BJ (cell line): ENCODE measurements at regions of chr12 and their contacts with region 1.

Region 1: GRCh38 chr12:57111031-57111734 is at the start of gene STAT6:
- DNase-seq: no peak
- H3K4me3 ChIP-seq: peak within 1 kb of the TSS; percentile 73
- H3K27me3 ChIP-seq: no peaks in the 10 kb centered on the region
- CTCF ChIP-seq: no peak
- polyA plus RNA-seq, gene STAT6: 110 and 177 TPM in 2 replicates

Region 2: DNA sequence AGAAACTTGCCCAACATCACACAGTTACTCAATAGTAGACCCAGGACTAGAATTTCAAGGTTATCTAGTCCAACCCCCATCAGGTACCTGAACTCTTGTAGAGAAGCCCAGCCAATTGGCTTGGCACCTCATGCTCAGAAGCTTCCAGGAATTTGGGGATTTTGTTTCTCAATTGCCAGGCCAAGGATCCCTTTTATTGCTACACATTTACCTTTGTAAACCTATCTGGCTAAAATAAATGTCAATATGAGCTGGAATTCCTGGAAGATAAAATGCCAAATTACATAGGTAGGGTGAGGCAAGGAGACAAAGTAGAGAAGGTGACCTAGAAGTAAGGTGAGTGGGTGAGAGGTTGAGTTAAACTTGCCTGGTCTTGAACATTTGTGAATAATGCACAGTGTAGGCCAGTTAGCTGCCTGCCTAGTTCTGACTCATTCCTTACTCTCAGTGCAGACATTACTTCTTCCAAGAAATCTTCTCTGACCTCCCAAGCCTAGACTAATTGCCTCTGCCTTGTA is 213.3 kb before region 1 on chr12:
- CTCF ChIA-PET with region 1: no interaction called
- POLR2A ChIA-PET with region 1: no interaction called
- DNase-seq: no peak
- H3K4me3 ChIP-seq: no peak overlapping the region
- H3K27me3 ChIP-seq: no peaks in the 10 kb centered on the region
- CTCF ChIP-seq: no peak

Region 3: DNA sequence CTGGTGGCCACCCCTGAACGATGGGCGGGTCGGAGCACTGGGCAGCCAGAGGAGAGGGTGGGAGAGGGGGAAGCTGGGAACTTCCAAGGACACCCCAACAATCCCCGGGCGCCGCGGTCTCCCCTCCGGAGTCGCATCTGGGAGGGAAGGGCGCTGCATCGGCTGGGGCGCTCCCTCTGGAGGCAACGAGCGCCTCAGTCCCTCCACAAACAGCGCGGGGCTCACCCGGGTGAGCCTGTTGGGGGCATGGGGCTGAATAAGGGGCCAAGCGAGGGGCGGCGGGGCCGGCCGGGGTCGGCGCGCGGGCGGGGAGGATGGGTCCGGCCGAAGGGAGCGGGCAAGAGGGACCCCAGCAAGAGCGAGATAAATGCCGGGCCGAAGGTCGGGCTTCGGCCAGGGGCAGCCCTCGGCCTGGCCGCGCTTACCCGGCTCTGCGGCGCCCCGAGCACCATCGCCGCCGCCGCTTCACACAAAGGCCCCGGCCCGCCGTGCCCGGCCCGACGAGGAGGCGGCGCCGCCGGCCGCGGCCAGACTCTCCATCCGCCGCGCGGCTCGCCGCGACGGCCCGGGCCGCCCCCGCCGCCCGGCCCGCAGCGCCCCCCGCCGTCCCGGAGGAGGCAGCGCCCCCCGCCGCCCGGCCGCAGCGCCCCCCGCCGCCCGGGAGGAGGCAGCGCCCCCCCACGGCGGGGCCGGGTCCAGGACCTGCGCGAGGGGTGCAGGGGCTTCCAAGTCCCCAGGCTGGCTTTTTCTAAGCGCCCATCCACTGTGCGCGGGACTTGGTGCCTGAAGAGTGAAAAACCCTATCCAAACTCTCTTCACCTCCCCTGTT is 105.0 kb before region 1 on chr12 and contains the start of gene ZBTB39:
- CTCF ChIA-PET with region 1: interaction called, 21 read pairs
- POLR2A ChIA-PET with region 1: no interaction called
- DNase-seq: no peak
- H3K4me3 ChIP-seq: peak within 1 kb of the TSS; percentile 84
- H3K27me3 ChIP-seq: no peaks in the 10 kb centered on the region
- CTCF ChIP-seq: peak; percentile 49
- polyA plus RNA-seq, gene ZBTB39: 3.9 and 4.2 TPM in 2 replicates

Region 4: GRCh38 chr12:57069523-57069922 is 41.7 kb before region 1 on chr12:
- CTCF ChIA-PET with region 1: interaction called, 199 read pairs
- POLR2A ChIA-PET with region 1: interaction called, 8 read pairs
- DNase-seq: no peak
- H3K4me3 ChIP-seq: no peak overlapping the region
- H3K27me3 ChIP-seq: no peaks in the 10 kb centered on the region
- CTCF ChIP-seq: peak; percentile 83

Region 5: GRCh38 chr12:57088459-57089248 is 22.5 kb before region 1 on chr12 and contains the start of gene NAB2:
- CTCF ChIA-PET with region 1: interaction called, 190 read pairs
- POLR2A ChIA-PET with region 1: interaction called, 12 read pairs
- DNase-seq: peak; percentile 80
- H3K4me3 ChIP-seq: peak within 1 kb of the TSS; percentile 96
- H3K27me3 ChIP-seq: no peaks in the 10 kb centered on the region
- CTCF ChIP-seq: no peak
- polyA plus RNA-seq, gene NAB2: 41.7 and 50.2 TPM in 2 replicates

Region 6: GRCh38 chr12:57129889-57130288 is 18.7 kb after region 1 on chr12:
- CTCF ChIA-PET with region 1: interaction called, 70 read pairs
- POLR2A ChIA-PET with region 1: interaction called, 11 read pairs
- DNase-seq: no peak
- H3K4me3 ChIP-seq: peak overlapping the region; percentile 96
- H3K27me3 ChIP-seq: no peaks in the 10 kb centered on the region
- CTCF ChIP-seq: no peak

Region 7: DNA sequence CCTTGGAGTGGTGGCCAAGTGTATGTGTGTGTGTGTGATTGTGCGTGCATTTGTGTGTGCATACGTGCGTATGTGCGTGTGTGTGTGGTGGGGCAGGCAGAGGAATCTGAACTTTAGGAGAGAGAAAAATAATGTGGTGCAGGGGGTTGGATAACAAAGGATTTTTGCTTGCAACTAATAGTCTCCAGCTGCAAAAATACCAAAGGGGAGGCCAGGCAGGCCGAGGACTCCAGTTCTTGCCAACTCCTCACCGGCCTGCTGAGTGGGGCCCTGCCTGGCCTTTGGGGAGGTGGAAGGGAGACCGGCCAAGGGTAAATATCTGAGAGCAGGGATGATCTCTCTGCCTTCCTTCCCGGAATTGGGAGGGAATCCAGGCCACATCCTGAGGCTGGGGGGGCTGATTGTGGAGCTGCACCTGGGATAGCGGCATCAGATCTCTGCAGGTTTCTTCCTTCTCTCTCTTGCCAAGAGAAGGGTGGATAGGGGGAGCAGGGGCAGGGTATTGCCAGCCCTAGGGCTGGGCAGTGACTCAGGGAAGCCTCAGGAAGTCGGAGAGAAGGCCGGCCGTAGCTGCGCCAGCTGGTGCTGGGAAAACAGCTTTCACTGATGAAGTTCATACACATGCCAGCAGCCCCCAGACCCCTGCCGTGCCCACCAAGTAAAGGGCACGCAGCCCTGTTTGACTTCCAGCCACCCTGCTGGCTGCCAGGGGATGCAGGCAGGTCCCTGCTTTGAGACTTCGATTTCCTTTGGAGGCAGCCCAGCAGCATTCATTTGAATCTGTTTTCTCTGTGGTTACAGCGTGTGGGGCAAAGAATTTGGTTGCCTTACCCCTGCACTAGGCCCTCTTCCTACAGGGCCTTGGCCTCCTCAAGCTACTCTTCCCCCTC is 40.8 kb after region 1 on chr12:
- CTCF ChIA-PET with region 1: interaction called, 20 read pairs
- POLR2A ChIA-PET with region 1: no interaction called
- DNase-seq: no peak
- H3K4me3 ChIP-seq: no peak overlapping the region
- H3K27me3 ChIP-seq: no peaks in the 10 kb centered on the region
- CTCF ChIP-seq: no peak

Region 8: GRCh38 chr12:57182921-57183790 is 72.0 kb after region 1 on chr12:
- CTCF ChIA-PET with region 1: interaction called, 357 read pairs
- POLR2A ChIA-PET with region 1: no interaction called
- DNase-seq: no peak
- H3K4me3 ChIP-seq: no peak overlapping the region
- H3K27me3 ChIP-seq: no peaks in the 10 kb centered on the region
- CTCF ChIP-seq: peak; percentile 84

Region 9: DNA sequence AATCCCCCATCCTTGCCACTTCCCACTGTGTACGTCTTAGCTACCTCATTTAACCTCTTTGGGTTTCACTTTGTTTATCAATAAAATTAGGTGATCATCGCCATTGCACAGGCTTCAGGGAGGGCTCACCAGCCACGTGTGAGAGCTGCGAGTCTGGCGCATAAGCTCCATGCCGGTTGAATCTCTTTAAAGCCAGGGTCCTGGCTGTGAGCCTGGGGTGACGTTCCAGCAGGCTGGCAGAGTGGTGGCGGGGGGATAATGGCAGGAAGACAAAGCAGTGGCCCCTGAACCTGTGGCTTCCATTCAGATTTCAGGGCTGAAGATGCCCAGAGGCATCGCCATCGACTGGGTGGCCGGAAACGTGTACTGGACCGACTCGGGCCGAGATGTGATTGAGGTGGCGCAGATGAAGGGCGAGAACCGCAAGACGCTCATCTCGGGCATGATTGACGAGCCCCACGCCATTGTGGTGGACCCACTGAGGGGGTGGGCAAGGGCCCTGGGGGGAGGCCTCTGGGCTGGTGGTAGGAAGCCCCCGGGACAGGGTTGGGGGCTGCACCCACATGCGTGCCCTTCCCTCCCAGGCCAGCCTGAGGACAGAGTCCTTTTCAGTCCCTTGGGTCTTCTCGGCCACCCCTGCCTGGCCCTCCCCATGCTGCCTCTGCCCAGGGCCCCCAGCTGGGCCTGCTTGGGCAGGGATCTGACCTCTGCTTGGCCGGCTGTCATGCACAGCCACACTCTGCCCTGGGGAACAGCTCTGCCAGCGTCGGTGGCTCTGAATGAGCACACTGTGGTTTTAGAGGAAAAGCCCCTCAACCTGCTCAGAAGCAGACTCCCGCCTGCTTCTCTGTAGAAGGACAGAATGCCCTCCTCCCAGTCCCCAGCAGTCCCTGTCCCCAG is 96.8 kb after region 1 on chr12:
- CTCF ChIA-PET with region 1: no interaction called
- POLR2A ChIA-PET with region 1: no interaction called
- DNase-seq: no peak
- H3K4me3 ChIP-seq: no peak overlapping the region
- H3K27me3 ChIP-seq: no peaks in the 10 kb centered on the region
- CTCF ChIP-seq: no peak